Heart left ventricle (tissue), 16 donors: ENCODE measurements at regions of chr3 and their contacts with region 1.

Region 1: DNA sequence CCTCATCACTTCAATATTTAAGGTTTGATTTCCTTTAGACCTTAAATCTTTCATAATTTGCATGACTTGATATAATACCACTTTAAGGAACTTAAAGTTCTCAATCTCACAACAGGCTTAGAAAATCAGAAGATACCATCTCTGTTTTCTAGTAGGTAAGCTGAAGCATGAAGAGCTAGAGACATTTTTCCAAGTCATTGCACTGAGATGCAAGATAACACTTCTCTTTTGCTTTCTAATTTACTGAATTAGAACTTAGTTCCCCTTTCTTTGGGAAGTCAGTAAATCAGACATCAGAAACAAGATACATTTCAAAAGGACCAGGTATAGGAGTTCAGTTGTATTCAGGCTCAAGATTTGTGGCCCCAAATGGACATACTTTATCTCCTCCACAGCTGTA is 79.7 kb downstream of the DZIP3 start:
- DNase-seq: no peak
- ATAC-seq: no peak
- H3K4me3 ChIP-seq: no peak overlapping the region
- H3K27ac ChIP-seq: no peak overlapping the region
- H3K4me1 ChIP-seq: no peaks in the 10 kb centered on the region
- H3K27me3 ChIP-seq: no peaks in the 10 kb centered on the region
- CTCF ChIP-seq: no peak
- POLR2A ChIP-seq: no peak

Region 2: GRCh38 chr3:108705045-108705444 is 35.8 kb after region 1 on chr3:
- intact Hi-C with region 1: no loop called
- DNase-seq: no peak
- ATAC-seq: no peak
- H3K4me3 ChIP-seq: no peak overlapping the region
- H3K27ac ChIP-seq: no peak overlapping the region
- H3K4me1 ChIP-seq: no peaks in the 10 kb centered on the region
- H3K27me3 ChIP-seq: no peaks in the 10 kb centered on the region
- CTCF ChIP-seq: no peak
- POLR2A ChIP-seq: no peak

Region 3: DNA sequence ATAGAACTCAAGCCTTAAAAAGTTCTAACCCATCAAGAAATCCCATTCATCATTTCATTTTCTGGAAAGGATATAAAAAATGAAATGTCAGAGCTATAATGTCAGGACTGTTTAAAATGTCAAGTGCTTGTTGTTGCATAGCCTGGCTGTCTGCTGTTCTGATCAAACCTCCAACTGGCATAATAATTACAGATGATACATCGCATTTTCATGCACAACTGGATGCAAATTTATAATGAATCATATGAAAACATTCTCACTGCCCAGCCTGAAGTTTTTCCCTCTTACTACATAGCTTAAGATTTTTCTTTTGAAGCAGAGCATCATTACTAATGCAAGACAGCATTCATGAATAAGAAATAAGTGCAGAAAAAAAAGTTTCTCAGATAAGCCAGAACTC is 238.0 kb after region 1 on chr3:
- intact Hi-C with region 1: loop called in 3 of 10 experiments (anchors 2 to 10 kb)
- DNase-seq: no peak
- ATAC-seq: no peak
- H3K4me3 ChIP-seq: no peak overlapping the region
- H3K27ac ChIP-seq: no peak overlapping the region
- H3K4me1 ChIP-seq: no peaks in the 10 kb centered on the region
- H3K27me3 ChIP-seq: no peaks in the 10 kb centered on the region
- CTCF ChIP-seq: no peak
- POLR2A ChIP-seq: no peak

Region 4: GRCh38 chr3:108914774-108915641 is 245.8 kb after region 1 on chr3:
- intact Hi-C with region 1: loop called in 5 of 10 experiments (anchors 2 to 10 kb)
- DNase-seq: peak in 1 of 5 donors; percentile 10
- ATAC-seq: peak in 3 of 4 donors; percentile 37 to 75 (median 69)
- H3K4me3 ChIP-seq: no peak overlapping the region
- H3K27ac ChIP-seq: no peak overlapping the region
- H3K4me1 ChIP-seq: no peaks in the 10 kb centered on the region
- H3K27me3 ChIP-seq: no peaks in the 10 kb centered on the region
- CTCF ChIP-seq: peak; percentile 55 to 78 (median 70)
- POLR2A ChIP-seq: no peak